ENCODE measurements at regions of chr13 and their contacts with region 1.

Region 1: GRCh38 chr13:26985285-26985878 is 186.2 kb downstream of the USP12 start:
- DNase-seq: peak in 1 of 3 donors; percentile 73
- ATAC-seq: peak; percentile 48 to 71 (median 68)
- H3K4me3 ChIP-seq: no peak overlapping the region
- H3K27ac ChIP-seq: no peak overlapping the region
- H3K4me1 ChIP-seq: peaks cover 0 to 63% (median 19%) of the 10 kb centered on the region in 4 donors
- H3K27me3 ChIP-seq: no peaks in the 10 kb centered on the region
- CTCF ChIP-seq: peak; percentile 70 to 93 (median 78)
- POLR2A ChIP-seq: no peak

Region 2: GRCh38 chr13:27171827-27172494 is 186.6 kb after region 1 on chr13:
- intact Hi-C with region 1: no loop called
- DNase-seq: peak; percentile 96 to 97 (median 97)
- ATAC-seq: peak; percentile 87 to 98 (median 94)
- H3K4me3 ChIP-seq: peak overlapping the region; percentile 72 to 86 (median 83)
- H3K27ac ChIP-seq: peak overlapping the region; percentile 79 to 98 (median 95)
- H3K4me1 ChIP-seq: peaks cover 0 to 36% (median 7%) of the 10 kb centered on the region in 4 donors
- H3K27me3 ChIP-seq: no peaks in the 10 kb centered on the region
- CTCF ChIP-seq: peak in 3 of 4 donors; percentile 9 to 41 (median 23)
- POLR2A ChIP-seq: peak; percentile 75

Region 3: GRCh38 chr13:27182844-27183497 is 197.6 kb after region 1 on chr13:
- intact Hi-C with region 1: loop called in 1 of 2 experiments (anchors 10 kb)
- DNase-seq: peak; percentile 75 to 89 (median 80)
- ATAC-seq: peak; percentile 85 to 93 (median 88)
- H3K4me3 ChIP-seq: peak overlapping the region in 2 of 3 donors; percentile 1 to 14
- H3K27ac ChIP-seq: peak overlapping the region; percentile 79 to 93 (median 80)
- H3K4me1 ChIP-seq: peaks cover 0 to 19% (median 9%) of the 10 kb centered on the region in 4 donors
- H3K27me3 ChIP-seq: no peaks in the 10 kb centered on the region
- CTCF ChIP-seq: no peak
- POLR2A ChIP-seq: peak; percentile 32

Region 4: DNA sequence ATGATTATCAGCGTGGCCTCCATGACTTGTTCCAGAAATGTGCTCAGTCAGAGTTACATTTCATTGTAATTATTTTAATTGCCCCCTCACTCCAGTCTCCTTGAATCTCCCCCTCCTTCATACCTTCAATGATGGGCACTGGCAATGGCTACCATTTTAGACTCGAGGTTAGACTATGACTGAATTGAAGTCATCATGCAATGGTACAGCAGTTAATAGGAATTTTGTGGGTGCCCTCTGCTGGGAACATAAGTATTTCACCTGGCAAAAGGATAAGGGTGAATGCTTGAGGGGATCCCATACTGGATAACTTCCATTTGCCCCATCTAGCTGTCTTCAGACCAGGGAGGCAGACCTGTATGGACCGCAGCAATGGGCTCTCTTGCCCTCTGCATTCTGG is 218.5 kb after region 1 on chr13:
- intact Hi-C with region 1: loop called in 1 of 2 experiments (anchors 10 kb)
- DNase-seq: no peak
- ATAC-seq: peak; percentile 79 to 82 (median 80)
- H3K4me3 ChIP-seq: no peak overlapping the region
- H3K27ac ChIP-seq: no peak overlapping the region
- H3K4me1 ChIP-seq: no peaks in the 10 kb centered on the region
- H3K27me3 ChIP-seq: no peaks in the 10 kb centered on the region
- CTCF ChIP-seq: peak; percentile 36 to 48 (median 44)
- POLR2A ChIP-seq: no peak